Dorsolateral prefrontal cortex (tissue), 120 donors: ENCODE measurements at regions of chr4 and their contacts with region 1.

Region 1: DNA sequence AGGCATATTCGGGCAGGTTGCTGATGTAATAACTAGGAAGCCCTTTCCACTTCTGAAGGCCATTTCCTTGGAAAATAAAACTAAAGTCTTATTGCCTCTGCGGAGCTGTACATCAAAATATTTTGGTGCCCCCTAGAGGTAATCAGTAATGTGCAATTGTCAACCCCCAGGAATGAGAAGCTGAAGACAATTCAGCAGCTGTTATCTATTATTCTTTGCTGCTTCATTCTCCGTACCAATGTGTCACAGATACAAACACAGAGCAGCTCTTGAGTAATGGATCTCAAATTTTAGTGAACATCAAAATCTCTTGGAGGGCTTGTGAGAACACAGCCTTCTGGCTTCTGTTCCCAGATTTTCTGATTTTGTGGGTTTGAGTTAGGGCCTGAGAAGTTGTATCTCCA is 3.5 kb upstream of the SLIT2 start:
- DNase-seq: no peak
- H3K4me3 ChIP-seq: no peak overlapping the region
- H3K27ac ChIP-seq: no peak overlapping the region
- H3K27me3 ChIP-seq: peaks cover 0 to 13% (median 0%) of the 10 kb centered on the region in 45 donors
- CTCF ChIP-seq: peak; percentile 40 to 85 (median 75)

Region 2: GRCh38 chr4:18689308-18690115 is 1558.6 kb before region 1 on chr4:
- intact Hi-C with region 1: loop called in 1 of 2 experiments (anchors 10 kb)
- DNase-seq: peak in 5 of 10 donors; percentile 37 to 70 (median 55)
- H3K4me3 ChIP-seq: peak overlapping the region in 8 of 59 donors; percentile 9 to 48 (median 18)
- H3K27ac ChIP-seq: no peak overlapping the region
- H3K27me3 ChIP-seq: peaks cover 0 to 4% (median 0%) of the 10 kb centered on the region in 45 donors
- CTCF ChIP-seq: peak; percentile 75 to 97 (median 91)

Region 3: DNA sequence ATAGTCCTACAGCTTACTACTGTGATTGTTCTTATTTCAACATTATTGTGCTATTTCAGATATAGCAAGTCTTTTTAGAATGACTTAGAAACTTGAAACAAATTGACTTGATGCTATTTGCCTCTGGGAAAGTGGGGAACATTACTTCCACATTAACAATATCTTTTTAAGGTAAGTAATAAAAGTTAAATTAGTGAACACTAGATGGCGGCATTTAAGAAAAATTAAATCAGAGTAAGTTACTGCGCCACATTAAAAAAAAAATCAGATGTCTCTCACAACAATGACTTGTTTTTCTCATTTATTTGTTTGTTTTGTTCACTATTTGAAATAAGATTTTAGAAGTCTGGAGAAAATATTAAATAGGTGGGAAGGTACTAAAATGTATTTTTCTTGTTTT is 1023.3 kb before region 1 on chr4:
- intact Hi-C with region 1: loop called in 1 of 2 experiments (anchors 10 kb)
- DNase-seq: no peak
- H3K4me3 ChIP-seq: no peak overlapping the region
- H3K27ac ChIP-seq: no peak overlapping the region
- H3K27me3 ChIP-seq: peaks cover 0 to 3% (median 0%) of the 10 kb centered on the region in 45 donors
- CTCF ChIP-seq: peak; percentile 34 to 79 (median 57)